A549 (cell line): ENCODE measurements at regions of chr20 and their contacts with region 1.

Region 1: GRCh38 chr20:39112178-39112743 is 150.1 kb downstream of the DHX35 start:
- DNase-seq: peak; percentile 66 to 88
- ATAC-seq: peak; percentile 84 to 95
- H3K4me3 ChIP-seq: no peak overlapping the region
- H3K27ac ChIP-seq: no peak overlapping the region
- H3K4me1 ChIP-seq: peaks cover 14% of the 10 kb centered on the region
- CTCF ChIP-seq: peak; percentile 76
- EP300 ChIP-seq: no peak
- POLR2A ChIP-seq: no peak
- RAD21 ChIP-seq: peak; percentile 89

Region 2: DNA sequence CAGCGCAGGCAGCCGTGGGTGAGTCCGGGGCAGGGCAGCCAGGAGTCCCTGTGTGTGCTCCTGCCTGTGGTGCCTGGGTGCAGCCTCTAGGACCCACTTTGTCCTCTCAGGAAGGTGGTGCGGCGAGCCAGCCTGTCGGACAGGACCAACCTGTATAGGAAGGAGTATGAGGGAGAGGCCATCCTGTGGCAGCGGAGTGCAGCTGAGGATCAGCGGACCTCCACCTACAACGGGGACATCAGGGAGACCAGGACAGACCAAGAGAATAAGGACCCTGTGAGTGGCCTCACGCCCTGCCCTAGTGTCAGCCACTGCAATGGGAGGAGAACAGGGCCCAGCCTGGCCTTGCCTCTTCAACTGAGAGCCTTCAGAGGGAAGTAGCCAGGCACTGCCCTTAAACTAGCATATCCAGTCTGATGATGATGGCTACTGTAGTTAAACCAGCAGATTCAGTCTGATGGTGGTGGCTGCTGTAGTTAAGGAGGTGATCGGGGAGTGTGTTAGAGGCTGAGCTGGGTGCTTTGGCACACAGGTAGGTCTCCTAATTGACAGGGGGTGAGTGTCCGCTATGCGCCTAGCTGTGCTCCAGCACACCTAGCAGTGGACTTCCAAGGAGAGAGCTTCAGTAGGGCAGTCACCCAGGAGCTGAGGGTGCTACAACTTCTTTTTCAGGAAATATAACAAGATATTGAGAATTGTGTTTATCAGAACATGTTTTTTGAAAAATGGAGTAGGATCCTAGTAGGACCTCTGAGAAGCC is 204.2 kb before region 1 on chr20:
- CTCF ChIA-PET with region 1: no interaction called
- POLR2A ChIA-PET with region 1: no interaction called
- DNase-seq: no peak
- ATAC-seq: peak; percentile 20 to 40; a peak in 2 of 6 replicates
- H3K4me3 ChIP-seq: no peak overlapping the region
- H3K27ac ChIP-seq: no peak overlapping the region
- H3K4me1 ChIP-seq: peaks cover 9% of the 10 kb centered on the region
- CTCF ChIP-seq: no peak
- EP300 ChIP-seq: no peak
- POLR2A ChIP-seq: no peak
- RAD21 ChIP-seq: no peak

Region 3: GRCh38 chr20:39124064-39124463 is 11.8 kb after region 1 on chr20:
- CTCF ChIA-PET with region 1: interaction called, 33 read pairs
- POLR2A ChIA-PET with region 1: no interaction called
- DNase-seq: no peak
- ATAC-seq: no peak
- H3K4me3 ChIP-seq: no peak overlapping the region
- H3K27ac ChIP-seq: no peak overlapping the region
- H3K4me1 ChIP-seq: no peaks in the 10 kb centered on the region
- CTCF ChIP-seq: no peak
- EP300 ChIP-seq: no peak
- POLR2A ChIP-seq: no peak
- RAD21 ChIP-seq: no peak

Region 4: GRCh38 chr20:39129523-39129922 is 17.3 kb after region 1 on chr20:
- CTCF ChIA-PET with region 1: interaction called, 33 read pairs
- POLR2A ChIA-PET with region 1: no interaction called
- DNase-seq: no peak
- ATAC-seq: no peak
- H3K4me3 ChIP-seq: no peak overlapping the region
- H3K27ac ChIP-seq: no peak overlapping the region
- H3K4me1 ChIP-seq: no peaks in the 10 kb centered on the region
- CTCF ChIP-seq: no peak
- EP300 ChIP-seq: no peak
- POLR2A ChIP-seq: no peak
- RAD21 ChIP-seq: no peak

Region 5: GRCh38 chr20:39135885-39136544 is 23.8 kb after region 1 on chr20:
- CTCF ChIA-PET with region 1: interaction called, 11 read pairs
- POLR2A ChIA-PET with region 1: no interaction called
- DNase-seq: no peak
- ATAC-seq: no peak
- H3K4me3 ChIP-seq: no peak overlapping the region
- H3K27ac ChIP-seq: no peak overlapping the region
- H3K4me1 ChIP-seq: no peaks in the 10 kb centered on the region
- CTCF ChIP-seq: no peak
- EP300 ChIP-seq: no peak
- POLR2A ChIP-seq: no peak
- RAD21 ChIP-seq: no peak

Region 6: GRCh38 chr20:39264506-39265172 is 152.4 kb after region 1 on chr20:
- CTCF ChIA-PET with region 1: interaction called, 11 read pairs
- POLR2A ChIA-PET with region 1: no interaction called
- DNase-seq: peak; percentile 71 to 80
- ATAC-seq: peak; percentile 88 to 89
- H3K4me3 ChIP-seq: no peak overlapping the region
- H3K27ac ChIP-seq: no peak overlapping the region
- H3K4me1 ChIP-seq: no peaks in the 10 kb centered on the region
- CTCF ChIP-seq: peak; percentile 71
- EP300 ChIP-seq: no peak
- POLR2A ChIP-seq: no peak
- RAD21 ChIP-seq: peak; percentile 28 to 44; a peak in 4 of 5 replicates

Region 7: DNA sequence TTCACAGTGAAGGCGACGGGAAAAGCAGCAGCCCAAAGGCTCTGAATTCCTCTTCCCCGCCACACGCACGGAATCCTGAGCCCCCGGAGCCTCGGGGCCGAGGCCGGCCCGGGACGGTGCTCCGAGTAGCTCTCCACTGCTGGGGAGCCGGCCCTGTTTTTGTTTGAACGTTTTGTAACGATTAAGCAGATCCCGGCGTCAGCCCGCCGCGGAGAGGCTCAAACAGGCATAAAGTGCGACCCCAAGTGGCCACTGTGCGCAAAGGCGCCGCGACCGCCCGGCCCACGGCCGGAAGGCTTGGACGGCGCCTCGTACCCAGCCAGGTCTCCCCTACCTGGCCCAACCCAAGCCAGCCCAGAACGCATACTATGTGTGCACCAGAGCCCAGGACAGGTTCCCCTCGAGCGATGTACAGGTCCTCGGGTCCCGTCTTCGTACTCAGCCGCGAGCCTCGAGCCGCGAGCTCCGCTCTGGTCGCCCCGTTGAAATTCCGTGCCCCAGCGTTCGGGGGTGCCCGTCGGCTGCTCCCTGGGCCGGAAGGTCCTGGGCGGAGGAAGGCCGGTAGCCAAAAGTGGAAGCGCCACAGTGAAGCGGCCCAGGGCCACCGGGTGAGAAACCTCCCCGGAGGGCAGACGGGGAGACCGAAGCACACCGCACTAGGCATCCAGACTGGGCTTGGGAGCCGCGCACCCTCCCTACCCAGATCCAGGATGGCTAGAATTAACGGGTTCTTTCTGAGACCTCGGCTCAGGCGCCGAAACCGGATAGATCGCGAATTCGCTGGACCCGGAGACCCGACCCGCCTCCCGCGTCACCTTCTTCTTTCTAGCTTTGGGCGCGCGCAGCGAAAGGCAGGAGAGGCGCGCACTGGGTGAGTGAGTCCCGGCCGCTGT is 1577.9 kb after region 1 on chr20:
- CTCF ChIA-PET with region 1: interaction called, 10 read pairs
- POLR2A ChIA-PET with region 1: no interaction called
- DNase-seq: peak; percentile 73 to 86
- ATAC-seq: peak; percentile 72 to 91
- H3K4me3 ChIP-seq: peak overlapping the region; percentile 48
- H3K27ac ChIP-seq: peak overlapping the region; percentile 35 to 76; a peak in 3 of 6 replicates
- H3K4me1 ChIP-seq: no peaks in the 10 kb centered on the region
- CTCF ChIP-seq: peak; percentile 79
- EP300 ChIP-seq: no peak
- POLR2A ChIP-seq: no peak
- RAD21 ChIP-seq: peak; percentile 73 to 89

Region 8: DNA sequence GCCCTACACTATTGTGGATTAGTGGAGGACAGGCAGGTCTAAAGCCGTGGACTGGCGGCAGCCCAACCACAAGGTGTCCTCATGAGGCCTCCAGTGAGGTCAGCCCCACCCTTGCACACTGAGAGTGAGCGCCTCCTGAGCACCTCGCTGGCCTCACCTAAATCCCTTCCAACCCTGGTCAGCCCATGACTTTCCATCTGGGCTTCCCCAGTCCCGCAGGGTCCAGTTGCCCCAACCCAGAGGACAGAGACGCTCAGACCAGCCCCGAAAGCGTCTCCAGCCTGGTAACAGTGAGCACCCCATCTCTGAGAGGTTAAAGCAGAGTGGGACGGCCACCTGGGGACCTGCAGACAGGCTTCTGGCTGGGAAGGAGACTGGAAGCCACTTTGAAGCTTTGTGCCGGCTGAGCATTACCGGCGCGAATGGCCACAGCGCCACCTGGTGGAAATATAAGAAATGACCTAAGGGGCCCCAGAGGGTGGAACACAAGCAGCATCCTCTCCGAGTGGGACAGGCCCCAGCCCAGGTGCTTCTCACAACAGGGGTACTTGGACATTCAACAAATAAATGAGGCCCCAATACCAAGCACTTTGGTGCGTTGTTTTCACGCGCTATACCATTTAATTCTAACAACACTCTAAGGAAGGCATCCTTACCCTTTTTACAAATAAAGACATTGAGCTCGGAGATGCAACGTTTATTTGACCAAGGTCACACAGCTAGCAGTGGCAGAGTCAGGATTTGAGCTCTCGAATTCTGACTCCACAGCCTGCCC is 1850.7 kb after region 1 on chr20:
- CTCF ChIA-PET with region 1: interaction called, 40 read pairs
- POLR2A ChIA-PET with region 1: no interaction called
- DNase-seq: peak; percentile 63 to 82
- ATAC-seq: peak; percentile 87 to 96
- H3K4me3 ChIP-seq: no peak overlapping the region
- H3K27ac ChIP-seq: no peak overlapping the region
- H3K4me1 ChIP-seq: no peaks in the 10 kb centered on the region
- CTCF ChIP-seq: peak; percentile 85
- EP300 ChIP-seq: no peak
- POLR2A ChIP-seq: no peak
- RAD21 ChIP-seq: peak; percentile 83 to 87